ENCODE measurements at regions of chr11 and their contacts with region 1.

Region 1: DNA sequence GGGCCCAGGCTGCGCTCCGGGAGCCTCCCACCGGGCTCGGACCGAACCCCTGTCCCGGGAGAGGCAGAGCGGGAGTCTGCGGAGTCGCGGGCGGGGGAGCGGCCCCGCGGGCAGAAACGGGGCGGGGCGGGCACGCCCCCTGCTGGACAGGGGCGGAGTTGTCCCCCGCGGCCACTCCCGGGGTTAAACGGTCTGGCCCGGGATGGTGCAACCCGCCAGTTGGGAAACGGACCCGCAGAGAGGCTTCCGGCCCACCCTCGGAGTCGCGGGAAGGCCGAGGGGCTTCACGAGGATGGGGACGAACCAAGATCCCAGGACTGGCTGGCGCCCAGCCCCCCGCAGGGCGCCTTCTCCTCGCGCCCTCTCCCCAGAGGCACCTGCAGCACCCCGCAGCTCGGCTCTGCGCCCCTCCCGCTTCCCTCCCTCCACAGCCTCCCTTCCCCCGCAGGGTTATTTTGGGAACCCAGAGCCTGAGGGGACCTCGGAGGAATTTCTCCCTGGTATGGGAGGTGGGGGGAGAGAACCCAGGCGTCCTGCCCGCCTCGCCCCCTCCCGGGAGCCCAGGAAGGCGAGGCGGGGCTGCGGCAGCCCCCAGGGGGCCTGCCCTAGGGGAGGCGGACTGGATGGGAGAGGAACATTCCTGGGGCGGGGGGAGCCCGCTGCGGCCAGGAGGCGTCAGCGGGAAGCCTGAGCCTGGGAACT is 902 bp downstream of the RASGRP2 start:
- DNase-seq: peak; percentile 79
- H3K4me3 Mint-ChIP-seq: peak overlapping the region; percentile 95
- H3K27ac Mint-ChIP-seq: no peak overlapping the region
- H3K4me1 Mint-ChIP-seq: peaks cover 47% of the 10 kb centered on the region
- H3K27me3 Mint-ChIP-seq: no peaks in the 10 kb centered on the region

Region 2: DNA sequence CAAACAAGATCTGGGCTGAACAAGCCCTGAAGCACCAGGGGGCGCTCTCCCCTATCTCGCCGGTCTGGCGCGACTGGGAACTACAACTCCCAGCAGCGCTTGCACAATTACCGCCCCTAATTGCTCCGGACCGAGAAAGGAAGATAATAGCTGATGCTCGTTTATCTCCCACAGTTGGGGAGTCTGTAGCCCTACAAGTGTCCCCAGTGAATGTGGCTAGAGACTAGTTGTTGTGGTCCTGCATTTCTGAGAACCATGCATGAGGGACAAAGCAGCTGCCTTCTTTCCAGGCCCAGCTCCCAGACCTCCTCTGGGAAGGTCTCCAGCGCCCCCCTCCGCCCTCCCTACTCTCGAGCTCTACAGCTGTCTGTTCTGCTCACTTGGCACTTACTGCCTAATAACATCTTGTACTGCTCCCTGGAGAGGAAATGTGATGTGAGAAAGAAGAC is 54.5 kb before region 1 on chr11:
- CTCF ChIA-PET with region 1: interaction called, 25 read pairs
- POLR2A ChIA-PET with region 1: interaction called, 3 read pairs
- DNase-seq: peak; percentile 90
- H3K4me3 Mint-ChIP-seq: no peak overlapping the region
- H3K27ac Mint-ChIP-seq: no peak overlapping the region
- H3K4me1 Mint-ChIP-seq: peaks cover 25% of the 10 kb centered on the region
- H3K27me3 Mint-ChIP-seq: peaks cover 35% of the 10 kb centered on the region

Region 3: GRCh38 chr11:64753372-64754123 is 10.5 kb after region 1 on chr11:
- CTCF ChIA-PET with region 1: interaction called, 132 read pairs
- POLR2A ChIA-PET with region 1: interaction called, 435 read pairs
- DNase-seq: no peak
- H3K4me3 Mint-ChIP-seq: no peak overlapping the region
- H3K27ac Mint-ChIP-seq: no peak overlapping the region
- H3K4me1 Mint-ChIP-seq: peaks cover 18% of the 10 kb centered on the region
- H3K27me3 Mint-ChIP-seq: no peaks in the 10 kb centered on the region

Region 4: DNA sequence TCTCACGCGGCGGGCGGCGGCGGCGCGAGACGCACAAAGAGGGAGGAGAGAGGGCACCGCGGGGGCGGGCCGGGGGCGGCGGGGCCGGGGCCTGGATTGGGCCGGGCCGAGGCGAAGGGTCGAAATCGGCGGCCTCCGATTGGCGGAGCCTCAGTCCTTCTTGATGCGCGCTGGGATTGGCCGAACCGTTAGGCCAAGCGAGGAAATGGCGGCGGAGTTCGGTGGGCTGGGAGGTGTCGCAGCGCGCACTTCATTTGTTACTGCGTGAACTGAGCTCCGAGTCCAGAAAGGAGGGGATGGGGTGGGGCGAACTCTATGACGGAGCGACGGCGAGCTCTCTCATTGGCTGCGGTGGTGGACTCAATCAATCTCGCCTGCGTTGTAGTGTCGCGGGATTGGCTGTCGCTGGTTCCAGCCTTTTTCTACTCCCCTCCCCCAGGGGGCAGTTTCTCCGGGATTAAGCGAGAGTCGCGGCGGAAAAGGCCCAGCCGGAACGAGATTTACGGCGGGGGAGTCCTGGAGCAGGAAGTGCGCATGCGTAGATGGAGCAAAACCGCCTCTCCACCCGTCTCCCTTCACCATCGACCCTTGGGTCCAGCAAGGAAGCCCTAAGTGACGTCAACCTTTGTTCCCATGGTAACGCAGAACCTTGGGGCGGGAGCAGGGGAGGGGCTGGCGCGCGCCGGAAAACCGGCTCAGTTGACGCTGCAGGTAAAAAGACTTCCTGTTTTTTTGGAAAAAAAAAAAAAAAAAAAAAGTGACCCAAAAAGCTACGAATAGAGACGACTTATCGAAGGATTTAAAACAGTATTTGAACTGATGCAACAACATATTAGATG is 35.7 kb after region 1 on chr11 and contains the start of gene SF1:
- CTCF ChIA-PET with region 1: interaction called, 23 read pairs
- POLR2A ChIA-PET with region 1: interaction called, 197 read pairs
- DNase-seq: peak; percentile 100
- H3K4me3 Mint-ChIP-seq: peak within 1 kb of the TSS; percentile 86
- H3K27ac Mint-ChIP-seq: peak within 1 kb of the TSS; percentile 100
- H3K4me1 Mint-ChIP-seq: peaks cover 57% of the 10 kb centered on the region
- H3K27me3 Mint-ChIP-seq: no peaks in the 10 kb centered on the region
- total RNA-seq, gene SF1: 385 to 390 TPM

Region 5: GRCh38 chr11:64864473-64865285 is 121.6 kb after region 1 on chr11:
- CTCF ChIA-PET with region 1: interaction called, 5 read pairs
- POLR2A ChIA-PET with region 1: interaction called, 16 read pairs
- DNase-seq: no peak
- H3K4me3 Mint-ChIP-seq: peak overlapping the region; percentile 68
- H3K27ac Mint-ChIP-seq: peak overlapping the region; percentile 98
- H3K4me1 Mint-ChIP-seq: peaks cover 92% of the 10 kb centered on the region
- H3K27me3 Mint-ChIP-seq: no peaks in the 10 kb centered on the region

Measured in activated CD4-positive, alpha-beta memory T cell treated with anti-CD3 and anti-CD28 coated beads, Interleukin-2, amount 10 ng/mL, durations not matched to agents 7 days and 5 days (primary cell).